ENCODE measurements at regions of chr16 and their contacts with region 1.

Region 1: GRCh38 chr16:14285513-14286385 is 214.6 kb downstream of the MRTFB start:
- DNase-seq: peak; percentile 95
- ATAC-seq: peak; percentile 78
- H3K4me3 Mint-ChIP-seq: peak overlapping the region; percentile 80
- H3K27ac Mint-ChIP-seq: peak overlapping the region; percentile 84
- H3K4me1 Mint-ChIP-seq: peaks cover 13% of the 10 kb centered on the region
- H3K27me3 Mint-ChIP-seq: no peaks in the 10 kb centered on the region

Region 2: GRCh38 chr16:13935408-13935807 is 350.3 kb before region 1 on chr16:
- CTCF ChIA-PET with region 1: no interaction called
- POLR2A ChIA-PET with region 1: no interaction called
- intact Hi-C with region 1: loop called in 1 of 2 experiments (anchors 5 kb)
- DNase-seq: peak; percentile 55
- ATAC-seq: no peak
- H3K4me3 Mint-ChIP-seq: no peak overlapping the region
- H3K27ac Mint-ChIP-seq: no peak overlapping the region
- H3K4me1 Mint-ChIP-seq: peaks cover 19% of the 10 kb centered on the region
- H3K27me3 Mint-ChIP-seq: no peaks in the 10 kb centered on the region